Transverse colon (tissue), 4 donors: ENCODE measurements at regions of chr15 and their contacts with region 1.

Region 1: DNA sequence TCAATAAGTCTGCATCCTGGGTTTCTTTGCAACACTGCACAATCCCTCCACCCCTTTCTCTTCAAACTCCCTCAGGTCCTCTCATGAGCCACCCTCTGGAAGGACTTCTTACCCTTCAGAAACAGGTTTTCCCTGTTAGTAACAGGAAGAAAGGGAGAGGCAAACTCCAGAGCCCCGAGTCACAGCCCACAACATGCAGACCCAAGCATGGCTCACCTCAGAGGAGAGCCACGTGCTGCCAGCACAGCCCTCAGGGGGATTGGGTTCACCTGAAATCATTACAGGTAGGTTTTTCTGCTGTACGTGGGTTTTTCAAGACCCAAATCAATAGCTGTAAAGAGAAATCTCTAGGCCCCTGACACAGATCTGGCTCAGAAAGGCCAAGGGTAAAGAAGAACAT is 359.7 kb upstream of the ATP10A start:
- DNase-seq: no peak
- H3K4me3 ChIP-seq: no peak overlapping the region
- H3K27ac ChIP-seq: no peak overlapping the region
- H3K4me1 ChIP-seq: no peaks in the 10 kb centered on the region
- H3K27me3 ChIP-seq: no peaks in the 10 kb centered on the region
- CTCF ChIP-seq: no peak
- EP300 ChIP-seq: no peak
- POLR2A ChIP-seq: no peak

Region 2: DNA sequence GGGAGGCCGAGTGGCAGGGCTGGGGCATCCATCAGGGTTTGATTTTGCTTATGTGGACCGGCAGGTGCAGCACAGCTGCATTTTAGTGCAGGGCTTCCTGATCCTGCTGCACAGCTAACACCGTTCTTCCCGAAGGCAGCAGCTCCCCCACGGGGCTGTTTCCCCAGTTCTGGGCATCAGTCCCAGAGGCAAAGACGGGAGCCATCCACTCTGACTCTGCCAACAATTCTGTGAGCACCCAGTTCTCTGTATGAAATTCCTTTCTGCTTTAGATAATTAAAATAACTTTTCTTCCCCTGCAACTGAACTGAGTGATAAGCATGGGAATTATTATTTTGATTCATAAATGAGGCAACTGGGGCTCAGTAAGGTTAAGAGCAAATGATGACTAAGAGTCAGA is 96.7 kb before region 1 on chr15:
- in situ Hi-C with region 1: no loop called
- intact Hi-C with region 1: loop called (anchors 10 kb)
- DNase-seq: no peak
- H3K4me3 ChIP-seq: no peak overlapping the region
- H3K27ac ChIP-seq: no peak overlapping the region
- H3K4me1 ChIP-seq: no peaks in the 10 kb centered on the region
- H3K27me3 ChIP-seq: no peaks in the 10 kb centered on the region
- CTCF ChIP-seq: no peak
- EP300 ChIP-seq: no peak
- POLR2A ChIP-seq: no peak

Region 3: GRCh38 chr15:26294059-26294689 is 71.4 kb after region 1 on chr15:
- in situ Hi-C with region 1: no loop called
- intact Hi-C with region 1: no loop called
- DNase-seq: no peak
- H3K4me3 ChIP-seq: no peak overlapping the region
- H3K27ac ChIP-seq: no peak overlapping the region
- H3K4me1 ChIP-seq: no peaks in the 10 kb centered on the region
- H3K27me3 ChIP-seq: no peaks in the 10 kb centered on the region
- CTCF ChIP-seq: no peak
- EP300 ChIP-seq: no peak
- POLR2A ChIP-seq: no peak